ENCODE measurements at regions of chr16 and their contacts with region 1.

Region 1: GRCh38 chr16:18983565-18984424 is at the start of gene TMC7:
- DNase-seq: peak; percentile 88 to 95
- H3K4me3 ChIP-seq: peak within 1 kb of the TSS; percentile 48
- H3K4me1 ChIP-seq: peaks cover 3% of the 10 kb centered on the region; the same call in 1 of the 2 replicates
- H3K27me3 ChIP-seq: peaks cover 5% of the 10 kb centered on the region; the same call in 1 of the 2 replicates

Region 2: GRCh38 chr16:19044769-19045168 is 61.0 kb after region 1 on chr16:
- in situ Hi-C with region 1: no loop called
- DNase-seq: no peak
- H3K4me3 ChIP-seq: no peak overlapping the region
- H3K4me1 ChIP-seq: no peaks in the 10 kb centered on the region
- H3K27me3 ChIP-seq: no peaks in the 10 kb centered on the region

Region 3: GRCh38 chr16:19071811-19072777 is 88.3 kb after region 1 on chr16:
- in situ Hi-C with region 1: loop called (anchors 10 kb)
- DNase-seq: peak; percentile 9 to 79
- H3K4me3 ChIP-seq: no peak overlapping the region
- H3K4me1 ChIP-seq: peaks cover 6% of the 10 kb centered on the region
- H3K27me3 ChIP-seq: no peaks in the 10 kb centered on the region

Region 4: GRCh38 chr16:19274165-19274797 is 290.5 kb after region 1 on chr16:
- in situ Hi-C with region 1: no loop called
- DNase-seq: no peak
- H3K4me3 ChIP-seq: no peak overlapping the region
- H3K4me1 ChIP-seq: peaks cover 5% of the 10 kb centered on the region
- H3K27me3 ChIP-seq: no peaks in the 10 kb centered on the region

Region 5: DNA sequence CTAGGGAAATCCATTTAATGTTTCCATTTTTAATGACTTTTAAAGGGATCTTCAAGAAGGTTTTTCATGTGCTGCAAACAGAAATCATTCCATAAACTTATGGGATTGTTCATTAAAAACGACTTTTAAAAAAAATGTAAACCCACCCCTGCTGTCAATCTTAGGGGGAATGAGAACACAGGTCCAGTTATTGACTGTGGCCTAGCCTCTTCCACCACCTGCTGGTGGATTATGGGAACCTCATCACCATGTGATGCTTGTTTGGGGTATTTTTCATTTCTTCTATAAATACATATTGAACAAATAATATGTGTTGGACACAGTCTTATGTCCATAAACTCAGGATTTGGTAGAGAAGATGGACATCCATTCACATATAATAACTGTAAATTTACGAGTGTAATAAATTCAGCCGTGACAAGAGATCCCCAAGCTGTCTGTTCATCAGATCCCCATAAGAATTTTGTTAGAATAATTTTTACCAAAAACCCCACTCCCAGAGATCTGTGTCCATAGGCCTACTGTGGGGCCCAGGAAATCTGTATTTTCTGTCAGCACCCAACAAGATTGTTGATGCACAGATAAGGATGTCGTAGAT is 391.9 kb after region 1 on chr16:
- in situ Hi-C with region 1: loop called (anchors 10 kb)
- DNase-seq: peak; percentile 59 to 64
- H3K4me3 ChIP-seq: no peak overlapping the region
- H3K4me1 ChIP-seq: no peaks in the 10 kb centered on the region
- H3K27me3 ChIP-seq: no peaks in the 10 kb centered on the region

Measured in HAP-1 (cell line).